ENCODE measurements at regions of chr5 and their contacts with region 1.

Region 1: DNA sequence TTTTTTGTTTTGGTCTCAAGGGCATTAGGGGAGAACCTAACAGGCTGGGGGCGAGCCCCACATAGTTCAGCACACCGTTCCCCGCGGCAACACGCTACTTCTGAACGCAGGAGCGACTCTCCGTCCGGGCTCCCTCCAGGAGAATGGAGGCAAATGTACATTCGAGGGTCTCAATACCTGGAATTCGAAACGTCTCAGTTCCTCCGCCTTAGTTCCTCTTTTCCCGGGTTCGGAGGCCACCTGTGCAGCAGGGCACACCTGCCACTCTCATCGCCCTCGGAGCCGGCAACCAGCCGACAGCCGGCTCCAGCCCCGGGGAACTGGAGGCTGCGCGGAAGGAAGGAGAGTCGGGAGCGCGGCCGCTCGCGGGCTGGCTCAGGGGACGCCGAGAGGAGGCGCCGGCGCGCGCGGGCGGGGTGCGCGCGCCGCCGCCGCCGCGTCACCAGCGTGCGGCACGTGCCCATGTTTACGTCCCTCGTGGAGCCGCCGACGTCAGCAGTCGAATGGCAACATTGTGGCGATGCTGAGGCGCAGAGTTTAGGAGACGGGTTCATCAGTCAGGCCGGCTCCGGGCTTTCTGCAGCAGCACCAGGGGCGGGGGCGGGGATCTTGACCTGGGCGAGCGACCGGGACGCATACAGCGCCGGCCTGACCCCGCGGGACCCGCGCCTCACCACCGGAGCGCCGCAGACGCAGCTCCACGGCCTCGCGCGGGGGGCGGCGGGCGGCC is at the start of gene JMY:
- DNase-seq: peak; percentile 87
- H3K4me3 ChIP-seq: peak within 1 kb of the TSS; percentile 97
- H3K27ac ChIP-seq: peak within 1 kb of the TSS; percentile 51
- H3K4me1 ChIP-seq: peaks cover 27% of the 10 kb centered on the region
- CTCF ChIP-seq: no peak
- total RNA-seq, gene JMY: 4.3 and 4.5 TPM in 2 replicates

Region 2: DNA sequence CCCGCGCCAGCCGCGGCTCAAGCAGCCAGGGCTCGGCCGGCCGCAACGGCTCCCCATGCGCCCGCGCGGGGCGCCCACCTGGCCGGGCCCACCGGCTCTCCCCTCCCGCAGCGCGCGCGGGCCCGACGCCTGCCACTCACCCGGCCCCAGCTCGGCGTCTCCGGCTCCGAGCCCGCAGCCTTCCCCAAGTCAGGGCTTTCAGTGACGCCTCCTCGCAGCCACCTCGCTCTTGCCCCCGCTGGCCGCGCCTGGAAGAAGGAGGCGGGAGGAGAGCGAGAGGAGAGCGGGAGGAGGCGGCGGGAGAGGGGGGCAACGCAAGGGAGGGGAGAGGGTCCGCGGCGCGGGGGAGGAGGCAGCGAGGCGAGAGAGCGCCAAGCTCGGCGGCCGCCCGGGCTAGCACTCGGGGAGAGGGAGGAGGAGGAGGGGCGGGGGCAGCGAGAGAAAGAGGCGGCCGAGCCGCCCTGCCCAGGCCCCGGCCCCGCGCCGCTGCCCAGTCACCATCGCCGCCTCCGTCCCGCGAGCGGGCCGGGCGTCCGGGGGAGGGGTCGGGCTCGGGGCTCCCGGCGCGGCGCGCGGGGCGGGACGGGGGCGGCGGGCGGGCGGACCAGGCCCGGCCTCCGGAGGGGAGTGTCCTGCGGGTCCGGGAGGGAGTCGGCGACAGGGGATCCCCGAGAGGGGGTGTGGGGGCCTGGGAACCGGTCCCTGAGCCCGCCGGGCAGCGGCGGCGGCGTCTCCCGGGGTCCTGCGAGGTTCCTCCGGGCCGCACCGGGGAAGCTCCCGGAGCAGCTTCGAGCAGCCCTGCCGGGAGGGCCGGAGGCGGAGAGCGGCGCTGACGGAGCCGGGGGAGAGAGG is 587.2 kb before region 1 on chr5 and contains the start of gene LHFPL2:
- CTCF ChIA-PET with region 1: no interaction called
- POLR2A ChIA-PET with region 1: no interaction called
- intact Hi-C with region 1: loop called (anchors 2 kb)
- DNase-seq: peak; percentile 75
- H3K4me3 ChIP-seq: peak within 1 kb of the TSS; percentile 77
- H3K27ac ChIP-seq: peak within 1 kb of the TSS; percentile 20
- H3K4me1 ChIP-seq: peaks cover 31% of the 10 kb centered on the region
- CTCF ChIP-seq: 0 out of 2 replicates have a peak, but pooled peaks have one; percentile 39
- total RNA-seq, gene LHFPL2: 8.4 and 12.2 TPM in 2 replicates

Region 3: GRCh38 chr5:79263290-79263689 is 27.5 kb after region 1 on chr5:
- CTCF ChIA-PET with region 1: no interaction called
- POLR2A ChIA-PET with region 1: interaction called, 5 read pairs
- intact Hi-C with region 1: loop called (anchors 1 kb)
- DNase-seq: peak; percentile 92
- H3K4me3 ChIP-seq: peak overlapping the region; percentile 47
- H3K27ac ChIP-seq: peak overlapping the region; percentile 90
- H3K4me1 ChIP-seq: peaks cover 55% of the 10 kb centered on the region
- CTCF ChIP-seq: no peak

Region 4: GRCh38 chr5:79464695-79465332 is 229.0 kb after region 1 on chr5:
- CTCF ChIA-PET with region 1: no interaction called
- POLR2A ChIA-PET with region 1: no interaction called
- intact Hi-C with region 1: loop called (anchors 5 kb)
- DNase-seq: peak; percentile 60
- H3K4me3 ChIP-seq: no peak overlapping the region
- H3K27ac ChIP-seq: no peak overlapping the region
- H3K4me1 ChIP-seq: no peaks in the 10 kb centered on the region
- CTCF ChIP-seq: peak; percentile 96

Region 5: DNA sequence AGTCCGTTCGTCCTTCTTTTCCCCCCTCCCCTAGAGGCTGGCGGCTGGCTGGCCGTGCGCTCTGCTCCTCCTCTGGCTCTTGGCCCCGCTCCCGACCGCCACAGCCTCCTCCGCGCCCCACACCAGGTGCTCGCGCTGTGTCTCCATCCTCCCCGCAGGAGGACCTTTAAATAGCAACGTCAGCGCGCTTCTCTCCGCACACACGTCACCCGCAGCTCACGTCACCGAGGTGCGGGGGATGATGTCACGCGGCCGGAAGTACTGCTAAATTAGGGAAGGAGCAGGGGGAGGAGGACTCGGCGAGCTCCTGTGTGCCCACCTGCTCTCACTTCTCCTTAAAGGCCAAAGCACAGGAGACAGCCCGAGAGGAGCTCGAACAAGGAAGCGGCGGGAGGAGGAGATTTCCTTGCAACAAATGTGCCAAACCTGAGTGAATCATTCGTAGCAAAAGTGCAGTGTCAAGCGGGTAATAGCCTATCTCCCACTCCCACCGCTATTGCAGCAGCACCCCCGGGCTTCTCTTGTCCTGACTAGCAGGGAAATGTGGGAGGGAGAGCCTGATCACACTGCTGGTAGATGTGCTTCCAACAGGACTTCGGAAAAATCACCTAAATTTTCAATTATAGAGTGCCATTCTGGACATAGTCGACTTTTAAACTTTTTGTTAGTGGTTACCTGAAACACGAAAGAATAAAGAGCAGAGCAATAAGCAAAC is 278.7 kb after region 1 on chr5:
- CTCF ChIA-PET with region 1: no interaction called
- POLR2A ChIA-PET with region 1: no interaction called
- intact Hi-C with region 1: loop called (anchors 5 kb)
- DNase-seq: peak; percentile 92
- H3K4me3 ChIP-seq: peak overlapping the region; percentile 71
- H3K27ac ChIP-seq: peak overlapping the region; percentile 63
- H3K4me1 ChIP-seq: peaks cover 39% of the 10 kb centered on the region
- CTCF ChIP-seq: no peak

Measured in OCI-LY7 (cell line).